ENCODE measurements at regions of chr2 and their contacts with region 1.

Region 1: DNA sequence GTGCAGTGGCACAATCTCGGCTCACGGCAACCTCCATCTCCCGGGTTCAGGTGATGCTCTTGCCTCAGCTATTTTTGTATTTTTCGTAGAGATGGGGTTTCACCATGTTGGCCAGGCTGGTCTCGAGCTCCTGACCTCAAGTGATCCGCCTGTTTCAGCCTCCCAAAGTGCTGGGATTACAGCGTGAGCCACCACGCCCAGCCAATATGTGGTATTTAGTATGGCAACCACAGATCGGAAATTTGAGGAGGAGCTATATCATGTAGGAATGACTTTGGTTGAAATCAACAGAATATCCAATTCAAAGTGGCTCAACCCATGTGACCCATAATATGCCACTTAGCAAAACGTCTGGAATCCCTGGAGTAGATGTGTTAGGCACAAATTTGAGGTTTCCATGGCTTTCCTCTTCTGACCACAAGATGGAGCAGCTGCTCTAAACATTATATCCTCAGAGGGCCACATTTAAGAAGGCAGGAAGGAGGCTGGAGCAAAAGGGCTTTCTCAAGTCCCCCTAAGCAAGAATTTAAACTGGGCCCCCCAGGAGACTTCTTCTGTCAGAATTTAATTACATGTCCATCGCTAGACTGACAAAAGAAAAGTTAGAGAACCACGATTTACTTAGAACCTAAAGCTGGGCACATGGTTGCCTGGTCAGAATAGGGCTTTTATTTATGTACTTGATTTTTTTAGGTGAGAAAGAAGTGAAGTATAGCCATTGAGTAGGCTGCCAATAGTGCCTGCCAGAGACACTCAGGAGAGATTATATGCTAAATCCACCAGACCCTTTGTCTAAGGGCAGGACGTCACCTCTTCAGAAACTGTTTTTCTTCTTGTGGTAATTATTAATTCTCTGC is 49.6 kb upstream of the ITSN2 start:
- DNase-seq: peak in 1 of 2 donors; percentile 48
- ATAC-seq: peak in 7 of 8 donors; percentile 75 to 84 (median 81)
- H3K4me3 ChIP-seq: no peak overlapping the region
- H3K27ac ChIP-seq: no peak overlapping the region
- H3K4me1 ChIP-seq: peaks cover 0 to 3% (median 0%) of the 10 kb centered on the region in 9 donors
- H3K27me3 ChIP-seq: peaks cover 0 to 14% (median 6%) of the 10 kb centered on the region in 7 donors
- CTCF ChIP-seq: peak; percentile 71 to 93 (median 84)

Region 2: GRCh38 chr2:23720705-23721453 is 689.0 kb before region 1 on chr2:
- intact Hi-C with region 1: no loop called
- DNase-seq: no peak
- ATAC-seq: peak in 5 of 8 donors; percentile 22 to 50 (median 38)
- H3K4me3 ChIP-seq: no peak overlapping the region
- H3K27ac ChIP-seq: no peak overlapping the region
- H3K4me1 ChIP-seq: peaks cover 0 to 11% (median 4%) of the 10 kb centered on the region in 9 donors
- H3K27me3 ChIP-seq: no peaks in the 10 kb centered on the region
- CTCF ChIP-seq: no peak

Region 3: GRCh38 chr2:24360050-24360962 is 49.6 kb before region 1 on chr2 and contains the start of gene ITSN2:
- intact Hi-C with region 1: no loop called
- DNase-seq: peak; percentile 75 to 85
- ATAC-seq: peak; percentile 86 to 95 (median 90)
- H3K4me3 ChIP-seq: peak within 1 kb of the TSS; percentile 61 to 100 (median 97)
- H3K27ac ChIP-seq: peak within 1 kb of the TSS; percentile 79 to 99 (median 98)
- H3K4me1 ChIP-seq: peaks cover 4 to 53% (median 35%) of the 10 kb centered on the region in 9 donors
- H3K27me3 ChIP-seq: no peaks in the 10 kb centered on the region
- CTCF ChIP-seq: no peak
- total RNA-seq, gene ITSN2: 32.1 to 49.8 (median 38.2) TPM

Region 4: GRCh38 chr2:24721470-24721869 is 311.5 kb after region 1 on chr2:
- intact Hi-C with region 1: loop called in 1 of 10 experiments (anchors 10 kb)
- DNase-seq: peak; percentile 52 to 90
- ATAC-seq: peak; percentile 89 to 99 (median 96)
- H3K4me3 ChIP-seq: no peak overlapping the region
- H3K27ac ChIP-seq: peak overlapping the region in 8 of 10 donors; percentile 0 to 57 (median 34)
- H3K4me1 ChIP-seq: peaks cover 0 to 33% (median 23%) of the 10 kb centered on the region in 9 donors
- H3K27me3 ChIP-seq: no peaks in the 10 kb centered on the region
- CTCF ChIP-seq: peak in 1 of 9 donors; percentile 5

Region 5: GRCh38 chr2:24827321-24828237 is 417.7 kb after region 1 on chr2:
- intact Hi-C with region 1: loop called (anchors 1 to 5 kb)
- DNase-seq: peak; percentile 68 to 86
- ATAC-seq: peak; percentile 89 to 97 (median 92)
- H3K4me3 ChIP-seq: no peak overlapping the region
- H3K27ac ChIP-seq: peak overlapping the region in 2 of 10 donors; percentile 8 to 26
- H3K4me1 ChIP-seq: peaks cover 4 to 22% (median 14%) of the 10 kb centered on the region in 9 donors
- H3K27me3 ChIP-seq: no peaks in the 10 kb centered on the region
- CTCF ChIP-seq: peak; percentile 81 to 96 (median 90)